Calu3 (cell line): ENCODE measurements at regions of chr16 and their contacts with region 1.

Region 1: DNA sequence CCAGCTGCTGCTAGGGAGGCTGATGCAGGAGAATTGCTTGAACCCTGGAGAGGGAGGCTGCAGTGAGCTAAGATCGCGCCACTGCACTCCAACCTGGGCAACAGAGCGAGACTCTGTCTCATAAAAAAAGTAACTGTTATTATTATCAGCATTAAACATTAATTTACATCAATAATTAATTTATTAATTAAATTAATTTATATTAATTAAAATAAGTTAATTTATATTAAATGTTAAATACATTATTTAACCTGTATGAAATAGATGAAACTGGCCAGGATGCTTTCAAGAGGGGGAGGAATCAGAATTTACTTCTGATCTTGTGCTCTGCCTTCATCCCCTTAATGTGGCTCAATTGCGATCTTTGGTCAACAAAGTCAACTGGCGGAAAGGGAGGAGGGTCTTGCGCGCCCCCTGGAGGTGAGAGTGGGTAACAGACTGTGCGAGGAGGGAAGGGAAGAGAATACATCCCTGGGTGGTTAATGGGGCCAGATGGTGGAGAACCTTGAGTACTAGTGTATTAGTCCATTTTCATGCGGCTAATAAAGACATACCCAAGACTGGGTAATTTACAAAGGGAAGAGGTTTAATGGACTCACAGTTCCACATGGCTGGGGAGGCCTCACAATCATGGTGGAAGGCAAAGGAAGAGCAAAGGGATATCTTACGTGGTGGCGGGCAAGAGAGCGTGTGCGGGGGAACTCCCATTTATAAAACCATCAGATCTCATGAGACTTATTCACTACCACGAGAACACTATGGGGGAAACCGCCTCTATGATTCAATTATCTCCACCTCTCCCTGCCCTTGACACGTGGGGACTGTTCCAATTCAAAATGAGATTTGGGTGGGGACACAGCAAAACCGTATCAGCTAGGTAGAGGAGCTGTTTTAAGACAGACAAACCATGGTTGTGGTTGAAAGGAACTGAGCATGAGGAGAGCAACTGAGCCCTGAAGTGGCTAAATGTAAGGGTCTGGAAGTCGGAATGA is 15.7 kb upstream of the CPPED1 start:
- DNase-seq: peak; percentile 70
- H3K4me3 Mint-ChIP-seq: no peak overlapping the region
- H3K27ac Mint-ChIP-seq: no peak overlapping the region
- H3K4me1 Mint-ChIP-seq: no peaks in the 10 kb centered on the region
- H3K27me3 Mint-ChIP-seq: no peaks in the 10 kb centered on the region
- CTCF ChIP-seq: peak; percentile 59

Region 2: DNA sequence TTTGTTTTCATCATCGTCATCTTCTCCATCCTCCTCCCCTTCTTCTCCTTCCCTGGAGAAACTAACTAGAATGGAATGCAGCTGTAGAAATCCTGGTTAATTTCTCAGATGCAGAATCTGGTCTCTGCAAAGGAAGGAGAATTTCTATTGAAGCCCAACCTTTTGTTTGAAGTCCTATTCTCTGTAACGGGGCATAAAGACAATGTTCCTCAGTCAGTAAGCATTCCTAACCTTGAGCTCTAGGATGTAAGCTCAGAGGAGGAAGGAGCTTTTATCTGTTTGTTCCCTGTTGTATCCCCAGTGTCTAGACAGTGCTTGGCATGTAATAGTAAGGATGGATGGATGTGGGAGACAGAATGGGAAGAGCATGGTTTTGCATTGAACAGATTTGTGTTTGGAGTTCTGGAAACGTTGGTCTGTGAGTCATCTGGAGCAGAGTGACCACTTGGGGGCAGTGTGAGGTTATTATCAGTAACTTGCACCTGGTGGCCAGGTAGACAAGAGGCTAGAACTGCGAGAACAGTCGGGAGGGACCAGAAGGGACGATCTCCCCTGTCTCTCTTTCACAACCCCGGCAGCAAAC is 479.2 kb before region 1 on chr16:
- CTCF ChIA-PET with region 1: interaction called, 3 read pairs
- intact Hi-C with region 1: loop called (anchors 5 kb)
- DNase-seq: peak; percentile 68
- H3K4me3 Mint-ChIP-seq: no peak overlapping the region
- H3K27ac Mint-ChIP-seq: no peak overlapping the region
- H3K4me1 Mint-ChIP-seq: peaks cover 24% of the 10 kb centered on the region
- H3K27me3 Mint-ChIP-seq: no peaks in the 10 kb centered on the region
- CTCF ChIP-seq: peak; percentile 68

Region 3: GRCh38 chr16:12455287-12455798 is 364.1 kb before region 1 on chr16:
- CTCF ChIA-PET with region 1: no interaction called
- intact Hi-C with region 1: loop called (anchors 1 kb)
- DNase-seq: peak; percentile 82
- H3K4me3 Mint-ChIP-seq: no peak overlapping the region
- H3K27ac Mint-ChIP-seq: no peak overlapping the region
- H3K4me1 Mint-ChIP-seq: peaks cover 5% of the 10 kb centered on the region
- H3K27me3 Mint-ChIP-seq: no peaks in the 10 kb centered on the region
- CTCF ChIP-seq: peak; percentile 92

Region 4: DNA sequence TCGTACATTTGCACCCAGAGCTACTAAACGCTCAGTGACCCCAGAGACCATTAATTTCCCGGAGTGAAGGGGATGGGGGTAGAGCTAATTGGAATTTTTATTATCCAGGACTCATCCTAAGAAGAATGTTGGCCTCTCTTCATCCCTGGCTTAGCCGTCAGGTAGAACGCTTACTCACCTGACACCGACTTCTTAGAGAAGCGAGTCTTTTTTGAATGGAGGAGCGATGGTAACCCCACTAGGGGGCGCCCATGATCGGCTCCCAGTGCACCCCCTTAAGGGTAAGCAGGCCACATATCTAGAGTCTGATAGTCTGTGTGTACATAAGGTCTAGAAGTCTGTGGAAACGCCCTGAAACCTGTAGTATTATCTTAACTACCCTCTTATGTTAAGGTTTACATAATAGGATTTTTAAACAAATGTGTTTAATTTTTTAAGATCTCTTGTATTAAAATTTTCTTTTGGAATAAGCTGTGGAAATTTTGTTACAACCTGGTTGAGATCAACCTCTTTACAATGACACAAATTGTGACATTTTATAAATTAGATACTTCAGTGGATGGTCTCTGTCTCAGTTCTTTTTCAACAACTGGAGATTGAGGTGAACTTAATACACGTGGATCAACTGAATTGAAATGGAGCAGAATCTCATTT is 245.6 kb before region 1 on chr16:
- CTCF ChIA-PET with region 1: no interaction called
- intact Hi-C with region 1: loop called (anchors 1 kb)
- DNase-seq: peak; percentile 84
- H3K4me3 Mint-ChIP-seq: no peak overlapping the region
- H3K27ac Mint-ChIP-seq: no peak overlapping the region
- H3K4me1 Mint-ChIP-seq: peaks cover 9% of the 10 kb centered on the region
- H3K27me3 Mint-ChIP-seq: no peaks in the 10 kb centered on the region
- CTCF ChIP-seq: peak; percentile 85

Region 5: GRCh38 chr16:12853972-12854371 is 34.5 kb after region 1 on chr16:
- CTCF ChIA-PET with region 1: no interaction called
- intact Hi-C with region 1: no loop called
- DNase-seq: no peak
- H3K4me3 Mint-ChIP-seq: no peak overlapping the region
- H3K27ac Mint-ChIP-seq: no peak overlapping the region
- H3K4me1 Mint-ChIP-seq: no peaks in the 10 kb centered on the region
- H3K27me3 Mint-ChIP-seq: no peaks in the 10 kb centered on the region
- CTCF ChIP-seq: no peak